Activated CD4-positive, alpha-beta T cell treated with anti-CD3 and anti-CD28 coated beads, Interleukin-2, amount 10 ng/mL, durations not matched to agents 24 days and 14 days (primary cell): ENCODE measurements at regions of chr17 and their contacts with region 1.

Region 1: GRCh38 chr17:60435244-60436167 is 13.2 kb downstream of the CHCT1 start:
- DNase-seq: peak; percentile 88
- H3K4me3 Mint-ChIP-seq: no peak overlapping the region
- H3K27ac Mint-ChIP-seq: no peak overlapping the region
- H3K4me1 Mint-ChIP-seq: no peaks in the 10 kb centered on the region
- H3K27me3 Mint-ChIP-seq: peaks cover 2% of the 10 kb centered on the region

Region 2: GRCh38 chr17:60142872-60143499 is 292.5 kb before region 1 on chr17:
- intact Hi-C with region 1: loop called (anchors 1 kb)
- DNase-seq: peak; percentile 95
- H3K4me3 Mint-ChIP-seq: peak overlapping the region; percentile 23
- H3K27ac Mint-ChIP-seq: no peak overlapping the region
- H3K4me1 Mint-ChIP-seq: peaks cover 26% of the 10 kb centered on the region
- H3K27me3 Mint-ChIP-seq: peaks cover 93% of the 10 kb centered on the region

Region 3: DNA sequence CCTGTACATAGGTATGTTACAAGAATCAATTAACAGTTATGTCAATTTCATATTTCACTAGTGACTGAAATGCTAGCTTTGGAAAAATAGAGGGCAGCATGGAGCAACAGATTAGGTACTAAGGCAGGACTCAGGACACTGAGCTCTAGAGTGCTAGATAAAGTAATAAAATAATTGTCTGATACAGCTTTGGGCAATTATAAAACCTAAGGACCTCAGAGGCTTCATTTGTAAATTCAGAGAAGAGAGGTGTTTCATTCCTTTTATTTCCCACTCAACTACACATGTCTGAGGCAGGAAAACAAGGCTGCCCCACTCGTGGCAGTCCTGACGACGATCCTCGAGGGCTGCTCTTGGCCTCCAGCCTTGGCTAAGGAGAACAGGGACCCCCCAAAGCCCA is 204.3 kb before region 1 on chr17:
- intact Hi-C with region 1: loop called (anchors 1 kb)
- DNase-seq: no peak
- H3K4me3 Mint-ChIP-seq: no peak overlapping the region
- H3K27ac Mint-ChIP-seq: no peak overlapping the region
- H3K4me1 Mint-ChIP-seq: no peaks in the 10 kb centered on the region
- H3K27me3 Mint-ChIP-seq: no peaks in the 10 kb centered on the region

Region 4: GRCh38 chr17:60481604-60482003 is 46.1 kb after region 1 on chr17:
- intact Hi-C with region 1: no loop called
- DNase-seq: no peak
- H3K4me3 Mint-ChIP-seq: no peak overlapping the region
- H3K27ac Mint-ChIP-seq: no peak overlapping the region
- H3K4me1 Mint-ChIP-seq: no peaks in the 10 kb centered on the region
- H3K27me3 Mint-ChIP-seq: no peaks in the 10 kb centered on the region

Region 5: DNA sequence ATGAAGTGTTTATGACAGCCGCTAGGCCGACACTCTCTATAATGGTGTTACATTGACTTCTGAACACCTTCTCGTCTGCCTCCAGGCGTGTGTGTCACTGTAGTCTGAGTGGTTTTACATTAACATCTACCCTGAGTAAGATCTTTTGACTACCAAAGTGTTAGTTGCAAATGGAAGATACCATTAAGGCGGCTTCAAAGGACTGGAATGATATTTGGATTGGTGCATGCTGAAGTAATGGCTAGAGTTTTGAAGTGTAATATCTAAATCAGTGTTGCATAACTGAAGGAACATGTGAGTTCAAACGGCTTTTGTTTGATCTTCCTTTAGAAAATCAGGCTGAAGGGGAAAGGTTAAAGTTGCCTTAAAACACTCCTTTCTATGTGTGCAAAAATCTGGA is 294.3 kb after region 1 on chr17:
- intact Hi-C with region 1: no loop called
- DNase-seq: no peak
- H3K4me3 Mint-ChIP-seq: no peak overlapping the region
- H3K27ac Mint-ChIP-seq: no peak overlapping the region
- H3K4me1 Mint-ChIP-seq: no peaks in the 10 kb centered on the region
- H3K27me3 Mint-ChIP-seq: peaks cover 3% of the 10 kb centered on the region